ENCODE measurements at regions of chr13 and their contacts with region 1.

Region 1: DNA sequence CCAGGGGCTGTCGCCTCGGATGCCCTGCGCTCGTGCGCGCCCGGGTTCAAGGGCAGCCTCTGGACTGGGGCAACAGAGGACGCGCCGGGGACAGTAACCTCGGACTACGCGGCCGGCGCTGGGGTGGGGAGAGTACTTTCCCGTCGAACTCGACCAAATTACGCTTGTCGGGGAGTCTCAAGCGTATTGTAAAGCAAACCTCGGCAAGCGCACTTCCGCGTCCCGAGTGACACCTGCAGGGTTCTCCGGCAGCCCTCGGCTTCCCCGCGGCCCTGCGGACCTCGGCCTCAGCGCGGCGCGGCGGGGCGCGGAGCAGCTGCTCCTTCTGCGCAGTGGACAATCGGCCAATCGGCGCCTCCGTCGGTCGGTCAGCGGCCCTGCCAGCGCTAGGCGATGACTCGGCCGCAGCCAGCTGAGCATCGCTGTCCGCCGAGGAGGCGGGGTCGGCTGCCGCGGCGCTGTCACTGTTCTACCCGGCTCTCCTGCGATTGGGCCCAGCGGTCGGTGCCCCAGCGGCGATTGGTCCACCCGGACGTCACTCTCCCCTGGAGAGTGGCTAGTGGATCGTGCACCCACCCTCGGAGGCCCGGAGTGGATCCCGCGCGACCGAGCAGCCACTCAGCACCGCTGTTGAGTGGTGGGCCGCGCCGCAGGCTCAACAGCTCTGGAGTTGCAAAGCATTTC is at the start of gene SLC46A3:
- DNase-seq: peak; percentile 84
- ATAC-seq: peak; percentile 94
- H3K4me3 ChIP-seq: peak within 1 kb of the TSS; percentile 71
- H3K27ac ChIP-seq: peak within 1 kb of the TSS; percentile 46
- H3K4me1 ChIP-seq: peaks cover 32% of the 10 kb centered on the region
- H3K27me3 ChIP-seq: no peaks in the 10 kb centered on the region
- CTCF ChIP-seq: no peak
- total RNA-seq, gene SLC46A3: 0.84 and 1.4 TPM in 2 replicates

Region 2: GRCh38 chr13:28475916-28476725 is 242.6 kb before region 1 on chr13:
- CTCF ChIA-PET with region 1: no interaction called
- POLR2A ChIA-PET with region 1: no interaction called
- intact Hi-C with region 1: no loop called
- DNase-seq: peak; percentile 74
- ATAC-seq: peak; percentile 69
- H3K4me3 ChIP-seq: no peak overlapping the region
- H3K27ac ChIP-seq: no peak overlapping the region
- H3K4me1 ChIP-seq: peaks cover 11% of the 10 kb centered on the region; the same call in 1 of the 2 replicates
- H3K27me3 ChIP-seq: peaks cover 42% of the 10 kb centered on the region
- CTCF ChIP-seq: no peak

Region 3: GRCh38 chr13:28753243-28753887 is 34.7 kb after region 1 on chr13:
- CTCF ChIA-PET with region 1: no interaction called
- POLR2A ChIA-PET with region 1: no interaction called
- intact Hi-C with region 1: loop called (anchors 5 kb)
- DNase-seq: peak; percentile 92
- ATAC-seq: peak; percentile 96
- H3K4me3 ChIP-seq: peak overlapping the region; percentile 44; the same call in 1 of the 2 replicates
- H3K27ac ChIP-seq: peak overlapping the region; percentile 76
- H3K4me1 ChIP-seq: peaks cover 26% of the 10 kb centered on the region
- H3K27me3 ChIP-seq: no peaks in the 10 kb centered on the region
- CTCF ChIP-seq: no peak

Measured in PC-3 (cell line).